ENCODE measurements at regions of chr20 and their contacts with region 1.

Region 1: DNA sequence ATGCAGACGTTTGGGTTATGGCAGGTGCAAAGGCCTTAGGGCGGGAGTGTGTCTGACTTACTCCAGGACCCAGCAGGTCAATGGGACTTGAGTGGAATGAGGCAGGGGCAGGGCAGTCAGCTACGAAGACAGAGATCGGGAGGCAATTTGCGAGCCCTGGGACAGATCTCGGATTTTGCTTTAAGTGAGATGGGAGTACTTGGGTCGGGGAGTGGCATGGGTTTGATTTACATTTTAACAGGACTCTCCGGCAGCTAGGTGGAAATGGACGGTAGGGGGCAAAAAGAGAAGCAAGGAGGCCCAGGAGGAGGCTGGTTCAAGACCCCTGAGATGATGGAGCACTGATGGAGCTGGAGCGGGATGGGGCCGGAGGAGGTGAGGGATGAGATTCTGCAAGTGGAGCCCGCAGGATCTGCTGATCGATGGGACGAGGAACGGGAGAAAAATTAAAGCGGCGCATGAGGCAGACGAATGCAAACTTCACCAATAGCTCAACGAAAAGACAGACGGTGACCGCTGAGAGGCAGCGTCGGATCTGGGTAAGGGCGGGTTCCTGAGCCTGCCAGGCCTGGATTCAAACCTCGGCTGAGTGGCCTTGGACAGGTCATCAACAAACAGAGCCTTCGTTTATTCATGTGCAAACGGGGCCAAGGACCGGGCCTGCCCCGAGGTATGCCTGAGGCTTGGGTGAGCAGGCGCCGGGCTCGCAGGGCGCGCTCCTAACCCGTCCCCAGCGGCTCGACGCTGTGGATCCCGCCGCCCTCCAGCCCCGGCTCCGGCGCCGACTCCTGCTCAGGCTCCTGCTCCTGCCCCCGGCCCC is 756 bp upstream of the RBCK1 start:
- DNase-seq: peak; percentile 73 to 78
- H3K4me3 ChIP-seq: peak overlapping the region in 2 of 3 donors; percentile 36 to 98
- H3K27ac ChIP-seq: peak overlapping the region in 2 of 3 donors; percentile 4 to 96
- H3K4me1 ChIP-seq: peaks cover 8 to 19% of the 10 kb centered on the region in 2 donors
- H3K27me3 ChIP-seq: no peaks in the 10 kb centered on the region
- CTCF ChIP-seq: peak in 3 of 6 experiments; percentile 2 to 7 (median 3)
- POLR2A ChIP-seq: peak in 1 of 2 donors; percentile 50

Region 2: GRCh38 chr20:371755-372542 is 35.4 kb before region 1 on chr20:
- intact Hi-C with region 1: no loop called
- DNase-seq: peak; percentile 77 to 85
- H3K4me3 ChIP-seq: no peak overlapping the region
- H3K27ac ChIP-seq: peak overlapping the region; percentile 54 to 79 (median 71)
- H3K4me1 ChIP-seq: peaks cover 22 to 37% of the 10 kb centered on the region in 2 donors
- H3K27me3 ChIP-seq: no peaks in the 10 kb centered on the region
- CTCF ChIP-seq: no peak
- POLR2A ChIP-seq: peak in 1 of 2 donors; percentile 6

Region 3: DNA sequence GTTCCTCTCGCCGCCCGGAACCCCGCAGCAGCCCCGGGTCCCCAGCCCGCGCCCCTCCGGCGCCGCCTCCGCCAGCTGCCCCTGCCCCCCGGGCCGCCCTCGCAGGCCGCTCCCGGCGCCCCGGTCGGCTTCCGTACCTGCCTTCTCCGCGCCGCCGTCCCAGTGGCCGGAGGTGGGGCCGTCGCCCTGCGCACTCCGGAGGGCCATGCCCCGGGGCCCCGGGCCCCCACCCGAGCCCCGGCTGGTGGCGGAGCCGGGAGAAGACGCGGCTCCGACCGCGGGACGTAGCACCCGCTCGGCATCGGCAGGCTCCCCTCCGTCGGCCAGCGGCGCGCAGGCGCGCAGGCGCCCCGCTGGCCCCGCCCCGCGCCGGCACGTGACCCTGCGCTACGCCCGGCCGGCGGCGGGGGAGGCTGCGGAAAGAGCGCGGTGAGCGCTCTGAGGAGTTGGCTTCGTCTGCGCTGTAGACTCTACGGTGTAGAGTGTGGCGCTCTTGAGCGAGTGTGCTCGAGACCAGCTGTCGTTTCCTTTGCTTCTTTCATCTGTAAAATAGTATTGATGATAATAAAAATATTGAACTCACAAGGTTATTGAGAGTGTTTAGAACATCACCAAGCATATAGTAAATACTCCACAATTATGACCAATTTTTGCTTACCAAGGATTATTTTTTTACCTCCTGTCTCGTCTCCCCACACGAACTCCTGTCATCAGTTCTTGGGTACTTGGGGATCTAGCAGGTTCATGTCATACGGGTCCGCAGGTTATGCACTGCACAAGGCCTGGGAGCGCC is 55.1 kb after region 1 on chr20 and contains the start of gene TBC1D20:
- intact Hi-C with region 1: loop called (anchors 10 kb)
- DNase-seq: peak; percentile 85
- H3K4me3 ChIP-seq: peak within 1 kb of the TSS; percentile 25 to 89 (median 87)
- H3K27ac ChIP-seq: peak within 1 kb of the TSS; percentile 85 to 93 (median 89)
- H3K4me1 ChIP-seq: peaks cover 20 to 23% of the 10 kb centered on the region in 2 donors
- H3K27me3 ChIP-seq: no peaks in the 10 kb centered on the region
- CTCF ChIP-seq: peak in 2 of 6 experiments; percentile 14
- POLR2A ChIP-seq: peak in 1 of 2 donors; percentile 94
- total RNA-seq, gene TBC1D20: 34.1 to 40.5 (median 35.6) TPM

Region 4: DNA sequence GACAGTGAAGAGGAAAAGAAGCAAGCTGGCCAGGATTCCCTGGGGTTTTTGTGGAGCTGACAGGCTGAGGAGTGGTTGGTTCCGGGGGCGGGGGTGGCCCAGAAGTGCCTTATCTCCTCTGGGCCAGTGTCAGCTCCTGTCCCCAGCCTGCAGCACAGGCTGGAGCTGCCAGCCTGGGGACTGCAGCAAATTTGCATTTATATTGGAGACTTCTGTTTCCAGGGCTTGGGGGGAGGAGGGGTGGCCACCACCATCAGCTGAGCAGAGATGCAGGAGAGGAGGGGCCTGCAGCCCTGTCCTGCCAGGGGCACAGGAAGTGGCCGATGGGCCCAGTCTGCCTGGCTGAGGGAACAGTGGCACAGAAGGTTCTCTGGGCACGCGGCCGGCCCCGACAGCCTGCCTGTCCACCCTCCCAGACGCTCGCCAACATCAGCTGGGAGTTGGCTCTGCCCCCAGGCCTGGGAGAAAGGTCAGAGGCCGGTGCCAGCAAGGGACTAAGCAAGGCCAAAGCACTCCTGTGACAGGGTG is 292.5 kb after region 1 on chr20:
- intact Hi-C with region 1: no loop called
- DNase-seq: no peak
- H3K4me3 ChIP-seq: no peak overlapping the region
- H3K27ac ChIP-seq: no peak overlapping the region
- H3K4me1 ChIP-seq: no peaks in the 10 kb centered on the region
- H3K27me3 ChIP-seq: no peaks in the 10 kb centered on the region
- CTCF ChIP-seq: no peak
- POLR2A ChIP-seq: no peak

Measured in thyroid gland (tissue), 4 donors.